PC-9 (cell line): ENCODE measurements at regions of chr5 and their contacts with region 1.

Region 1: DNA sequence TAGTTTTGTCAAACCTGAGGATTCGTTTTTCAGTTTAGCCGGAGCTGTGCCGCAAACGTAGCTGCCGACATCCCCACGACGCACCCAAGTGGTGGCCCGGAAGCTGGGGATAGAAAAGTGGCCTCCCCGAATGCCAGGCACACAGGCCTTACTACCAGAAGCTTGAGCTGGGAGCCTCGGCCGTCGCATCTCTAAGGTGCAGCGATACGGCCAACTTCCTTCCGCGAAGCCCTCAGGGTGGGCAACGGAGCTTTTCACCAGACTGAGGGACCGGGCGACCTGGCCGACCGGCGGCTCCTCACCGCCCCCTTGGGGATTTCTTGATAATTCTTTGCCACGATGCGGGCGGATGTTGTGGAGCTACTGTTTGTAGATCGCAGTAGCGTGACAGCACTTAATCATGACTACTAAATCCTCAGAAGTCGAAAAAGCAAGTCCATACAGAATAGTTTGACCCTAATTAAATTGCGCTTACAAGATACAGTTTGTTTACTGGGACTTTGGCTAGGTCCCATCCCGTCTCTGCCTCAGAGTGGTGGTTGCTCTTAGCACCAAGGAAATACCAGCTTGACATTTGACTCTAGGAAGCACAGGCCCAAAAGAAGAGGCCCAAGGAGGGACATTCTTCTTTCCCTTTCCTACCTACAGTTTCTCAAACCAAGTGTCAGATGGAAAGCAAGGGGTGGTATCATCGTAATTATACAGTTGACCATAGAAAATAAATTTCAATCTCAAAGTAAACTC is 613 bp upstream of the TMEM267 start:
- DNase-seq: peak; percentile 85 to 95
- H3K4me3 ChIP-seq: peak overlapping the region; percentile 69
- H3K27ac ChIP-seq: peak overlapping the region; percentile 86
- H3K4me1 ChIP-seq: peaks cover 21% of the 10 kb centered on the region
- H3K27me3 ChIP-seq: no peaks in the 10 kb centered on the region
- CTCF ChIP-seq: peak; percentile 97

Region 2: GRCh38 chr5:43066799-43067741 is 417.2 kb before region 1 on chr5:
- CTCF ChIA-PET with region 1: interaction called, 4 read pairs
- POLR2A ChIA-PET with region 1: interaction called, 3 read pairs
- intact Hi-C with region 1: loop called (anchors 5 kb)
- DNase-seq: peak; percentile 91 to 93
- H3K4me3 ChIP-seq: peak overlapping the region; percentile 75
- H3K27ac ChIP-seq: peak overlapping the region; percentile 84
- H3K4me1 ChIP-seq: peaks cover 27% of the 10 kb centered on the region
- H3K27me3 ChIP-seq: no peaks in the 10 kb centered on the region
- CTCF ChIP-seq: no peak

Region 3: DNA sequence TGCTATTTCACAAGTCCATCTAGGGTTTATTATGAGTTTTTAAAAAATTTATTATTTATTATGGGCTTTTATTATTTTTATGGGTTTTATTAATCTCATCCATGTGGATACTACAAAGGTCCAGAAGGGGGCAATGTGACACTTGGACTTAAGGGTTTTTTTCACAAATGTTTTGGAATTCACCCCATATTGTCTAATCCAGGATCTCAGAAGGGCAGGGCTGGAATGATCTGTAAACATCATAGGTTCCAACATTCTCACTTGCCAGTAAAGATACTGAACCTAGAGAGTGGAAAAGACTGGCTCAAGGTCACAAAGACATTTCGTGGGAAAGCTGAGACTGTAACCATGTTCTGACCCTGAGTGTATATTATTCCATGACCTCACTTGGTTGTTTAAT is 256.6 kb before region 1 on chr5:
- CTCF ChIA-PET with region 1: interaction called, 8 read pairs
- POLR2A ChIA-PET with region 1: interaction called, 11 read pairs
- intact Hi-C with region 1: loop called (anchors 1 kb)
- DNase-seq: peak; percentile 19 to 72
- H3K4me3 ChIP-seq: no peak overlapping the region
- H3K27ac ChIP-seq: no peak overlapping the region
- H3K4me1 ChIP-seq: no peaks in the 10 kb centered on the region
- H3K27me3 ChIP-seq: no peaks in the 10 kb centered on the region
- CTCF ChIP-seq: peak; percentile 93

Region 4: GRCh38 chr5:43389679-43390329 is 94.5 kb before region 1 on chr5:
- CTCF ChIA-PET with region 1: interaction called, 53 read pairs
- POLR2A ChIA-PET with region 1: interaction called, 22 read pairs
- intact Hi-C with region 1: loop called (anchors 1 kb)
- DNase-seq: peak; percentile 73 to 91
- H3K4me3 ChIP-seq: no peak overlapping the region
- H3K27ac ChIP-seq: no peak overlapping the region
- H3K4me1 ChIP-seq: 0 out of 2 replicates have a peak, but pooled peaks cover 5% of the 10 kb centered on the region
- H3K27me3 ChIP-seq: no peaks in the 10 kb centered on the region
- CTCF ChIP-seq: peak; percentile 99

Region 5: DNA sequence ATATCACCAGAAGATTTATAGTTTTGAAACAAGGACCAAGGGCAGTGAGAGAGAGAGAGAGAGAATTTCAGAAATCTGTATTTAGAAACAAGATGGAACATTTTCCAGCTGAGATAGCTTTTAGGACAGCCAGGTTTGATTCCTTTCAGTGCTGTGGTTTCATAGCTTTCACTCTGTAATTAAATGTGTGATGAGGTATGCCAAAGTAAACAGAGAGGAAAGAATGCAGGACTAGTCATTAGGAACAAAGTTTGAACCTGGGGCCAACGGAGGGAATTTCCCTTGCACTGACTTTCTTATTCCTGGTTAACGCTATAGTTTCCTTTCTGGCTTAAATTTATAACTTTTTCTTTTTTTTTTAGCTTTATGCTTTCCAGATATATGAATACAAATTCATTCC is 62.1 kb before region 1 on chr5:
- CTCF ChIA-PET with region 1: interaction called, 7 read pairs
- POLR2A ChIA-PET with region 1: interaction called, 10 read pairs
- intact Hi-C with region 1: no loop called
- DNase-seq: peak; percentile 56 to 95
- H3K4me3 ChIP-seq: no peak overlapping the region
- H3K27ac ChIP-seq: peak overlapping the region; percentile 68
- H3K4me1 ChIP-seq: peaks cover 43% of the 10 kb centered on the region
- H3K27me3 ChIP-seq: no peaks in the 10 kb centered on the region
- CTCF ChIP-seq: no peak

Region 6: DNA sequence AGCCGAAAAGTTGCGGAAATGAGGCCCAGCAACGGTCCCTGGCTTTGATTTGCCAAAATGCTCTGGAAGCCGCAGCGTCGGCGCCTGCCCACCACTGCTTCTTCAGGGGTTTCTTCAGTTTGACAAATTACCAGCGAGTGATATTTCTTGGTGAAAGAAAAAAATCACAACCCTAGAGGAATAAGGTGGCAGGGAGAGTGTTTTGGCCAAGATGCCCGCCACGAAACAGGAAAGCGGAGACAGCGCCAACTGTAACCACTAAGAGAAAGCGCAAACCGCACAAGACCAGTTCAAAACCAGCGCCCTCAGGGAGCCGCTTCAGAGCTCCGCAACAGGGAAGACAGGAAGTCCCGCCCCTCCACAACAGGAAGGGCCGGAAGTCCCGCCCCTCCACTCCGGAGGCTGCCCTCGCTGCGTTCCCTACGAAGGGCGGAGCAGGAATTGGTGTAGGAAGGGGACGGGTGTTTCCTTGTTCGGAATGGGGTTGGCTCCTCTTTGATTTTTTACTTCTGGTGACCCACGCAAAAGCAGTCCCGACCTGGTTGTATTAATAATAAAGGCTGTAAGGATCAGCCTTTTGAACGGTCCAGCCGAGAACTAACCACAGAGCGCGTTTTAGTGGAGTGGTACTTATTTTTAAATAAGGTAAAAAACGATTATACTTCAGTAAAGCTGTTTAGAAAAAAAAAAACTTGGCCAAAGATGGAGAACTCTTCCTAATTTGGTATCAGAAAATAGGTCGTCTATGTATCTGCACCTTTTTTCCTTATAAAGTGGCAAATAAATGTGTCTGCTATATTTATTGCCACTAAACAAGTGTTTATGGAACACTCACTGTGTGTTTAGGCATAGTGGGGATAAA is 30.8 kb after region 1 on chr5 and contains the start of gene C5orf34:
- CTCF ChIA-PET with region 1: interaction called, 11 read pairs
- POLR2A ChIA-PET with region 1: interaction called, 8 read pairs
- intact Hi-C with region 1: loop called (anchors 1 kb)
- DNase-seq: peak; percentile 99 to 100
- H3K4me3 ChIP-seq: peak within 1 kb of the TSS; percentile 73
- H3K27ac ChIP-seq: peak within 1 kb of the TSS; percentile 72
- H3K4me1 ChIP-seq: peaks cover 22% of the 10 kb centered on the region
- H3K27me3 ChIP-seq: no peaks in the 10 kb centered on the region
- CTCF ChIP-seq: 0 out of 2 replicates have a peak, but pooled peaks have one; percentile 15
- total RNA-seq, gene C5orf34: 16.0 and 22.6 TPM in 2 replicates

Region 7: GRCh38 chr5:43661102-43661501 is 176.8 kb after region 1 on chr5:
- CTCF ChIA-PET with region 1: no interaction called
- POLR2A ChIA-PET with region 1: no interaction called
- intact Hi-C with region 1: no loop called
- DNase-seq: peak; percentile 25 to 37
- H3K4me3 ChIP-seq: no peak overlapping the region
- H3K27ac ChIP-seq: no peak overlapping the region
- H3K4me1 ChIP-seq: no peaks in the 10 kb centered on the region
- H3K27me3 ChIP-seq: no peaks in the 10 kb centered on the region
- CTCF ChIP-seq: peak; percentile 89